ENCODE measurements at regions of chr11 and their contacts with region 1.

Region 1: DNA sequence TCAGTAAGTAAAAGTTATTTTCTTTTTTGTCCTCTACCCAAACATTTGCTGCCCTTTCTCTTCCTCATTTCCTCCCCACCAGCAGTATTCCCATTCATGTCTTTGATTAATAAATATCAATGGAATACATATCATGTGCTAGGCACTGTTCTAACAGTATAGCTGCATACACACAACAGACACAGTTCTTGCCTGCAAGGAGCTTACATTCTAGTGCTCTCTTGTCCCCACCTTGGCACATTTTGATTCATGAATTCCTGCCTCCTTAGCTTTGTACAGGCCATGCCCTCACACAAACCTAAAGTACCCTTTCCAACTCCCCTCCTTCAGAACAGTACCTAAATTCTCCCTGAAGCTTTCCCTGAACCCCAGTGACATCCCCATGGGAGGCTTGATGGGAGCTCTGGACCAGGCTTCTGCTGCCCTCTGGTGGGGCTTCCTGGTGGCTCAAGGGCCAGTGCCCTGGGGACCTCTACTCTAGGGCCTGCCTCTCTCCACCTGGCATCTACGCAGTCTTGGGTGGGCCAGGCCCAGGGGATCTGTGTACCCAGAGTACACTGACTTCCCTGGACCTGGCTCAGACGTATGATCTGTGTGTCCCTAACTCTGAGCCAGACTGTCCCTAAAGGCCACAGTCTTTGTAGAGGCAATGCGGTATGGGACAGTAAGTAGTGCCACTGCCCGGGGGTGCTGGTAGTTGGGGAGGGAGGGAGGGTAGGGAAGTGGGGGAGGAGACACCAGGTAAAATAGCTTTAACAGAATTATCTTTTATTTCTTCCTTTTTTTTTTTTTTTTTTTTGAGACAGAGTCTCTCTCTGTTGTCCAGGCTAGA is 14.1 kb downstream of the RPS13 start:
- DNase-seq: peak; percentile 46
- H3K4me3 ChIP-seq: no peak overlapping the region
- H3K27ac ChIP-seq: no peak overlapping the region
- H3K4me1 ChIP-seq: no peaks in the 10 kb centered on the region
- H3K27me3 ChIP-seq: no peaks in the 10 kb centered on the region
- CTCF ChIP-seq: peak; percentile 76 to 85
- POLR2A ChIP-seq: no peak

Region 2: DNA sequence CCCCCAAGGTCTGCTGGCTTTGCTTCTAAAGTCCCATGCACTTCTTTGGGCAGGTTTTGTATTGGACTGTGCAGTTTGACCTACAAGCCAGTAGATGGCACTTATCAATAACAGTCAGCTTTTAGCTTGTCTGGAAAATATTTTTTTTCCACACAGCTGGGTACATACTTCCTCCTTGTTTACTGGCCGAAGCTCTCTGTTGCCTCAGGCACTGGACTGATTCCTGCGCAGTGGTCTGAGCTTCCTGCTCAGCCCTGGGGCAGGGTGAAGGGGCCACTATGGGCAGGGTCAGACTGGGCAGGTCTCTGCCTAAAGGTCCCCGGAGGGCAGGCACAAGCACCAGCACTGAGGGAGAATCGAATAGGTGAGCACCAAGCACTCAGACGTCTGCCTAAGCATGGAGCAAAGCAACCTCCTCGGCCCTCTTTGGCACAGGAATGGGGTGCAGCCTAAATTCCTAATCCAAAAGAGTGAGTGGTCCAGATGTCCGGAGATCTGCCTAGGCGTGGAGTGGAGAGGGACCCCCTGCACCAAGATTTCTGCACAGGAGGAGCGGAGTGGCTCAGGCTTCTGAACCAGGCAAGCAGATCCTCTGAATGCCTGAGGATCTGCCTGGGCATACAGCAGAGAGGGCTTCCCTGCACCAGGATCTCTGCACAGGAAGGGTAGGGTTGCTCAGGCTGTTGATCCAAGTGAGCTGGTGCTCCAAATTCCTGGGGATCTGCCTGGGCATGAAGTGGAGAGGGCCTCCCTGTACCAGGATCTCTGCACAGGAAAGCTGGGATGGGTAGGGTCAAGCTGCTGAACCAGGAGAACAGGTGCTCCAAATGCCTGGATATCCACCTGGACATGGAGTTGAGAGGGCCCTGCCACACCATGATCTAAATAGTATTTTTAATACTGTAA is 430.8 kb before region 1 on chr11:
- CTCF ChIA-PET with region 1: interaction called, 12 read pairs
- POLR2A ChIA-PET with region 1: no interaction called
- dilution Hi-C with region 1: no loop called
- intact Hi-C with region 1: loop called (anchors 5 kb)
- DNase-seq: peak; percentile 8
- H3K4me3 ChIP-seq: no peak overlapping the region
- H3K27ac ChIP-seq: no peak overlapping the region
- H3K4me1 ChIP-seq: no peaks in the 10 kb centered on the region
- H3K27me3 ChIP-seq: peaks cover 0 to 2% of the 10 kb centered on the region in 2 experiments
- CTCF ChIP-seq: peak in 1 of 2 donors; percentile 51
- POLR2A ChIP-seq: no peak

Region 3: DNA sequence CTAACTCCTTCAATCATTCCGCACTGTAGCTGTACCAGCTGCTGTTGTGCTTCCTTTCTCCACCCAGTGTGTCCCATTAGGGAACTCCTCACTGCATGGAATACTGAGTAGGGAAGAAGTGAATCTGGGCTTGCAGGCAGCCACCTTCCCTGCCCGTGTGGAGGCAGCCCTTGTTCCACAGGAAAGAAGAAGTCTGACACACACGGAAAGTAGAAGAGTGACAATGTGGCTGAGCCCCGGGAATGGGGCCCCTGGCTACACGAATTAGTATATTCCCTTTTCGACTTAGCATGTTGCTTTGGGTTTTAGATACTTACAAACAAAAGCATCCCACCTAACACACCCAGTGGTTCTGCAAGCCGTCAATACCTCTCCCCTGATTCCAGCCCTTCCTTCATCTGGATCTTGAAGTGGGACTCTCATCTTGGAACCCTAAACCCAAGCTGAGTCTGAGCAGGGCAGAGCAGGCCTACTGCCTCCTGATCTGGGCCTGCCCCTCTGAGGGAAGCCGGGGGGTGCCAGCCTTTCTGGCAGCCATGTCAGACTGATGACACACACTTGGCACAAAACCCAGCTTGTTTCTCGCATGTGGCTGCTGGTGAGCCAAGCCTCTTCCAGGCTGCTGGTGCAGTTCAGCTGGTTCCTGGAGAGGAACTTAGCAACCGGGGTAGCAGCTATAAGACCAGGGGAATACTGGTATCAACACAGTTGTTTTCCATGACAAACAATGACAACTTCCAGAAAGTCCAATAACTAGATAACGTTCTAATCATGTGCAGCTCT is 253.3 kb before region 1 on chr11:
- CTCF ChIA-PET with region 1: interaction called, 10 read pairs
- POLR2A ChIA-PET with region 1: interaction called, 8 read pairs
- dilution Hi-C with region 1: no loop called
- intact Hi-C with region 1: no loop called
- DNase-seq: peak; percentile 65
- H3K4me3 ChIP-seq: no peak overlapping the region
- H3K27ac ChIP-seq: no peak overlapping the region
- H3K4me1 ChIP-seq: no peaks in the 10 kb centered on the region
- H3K27me3 ChIP-seq: no peaks in the 10 kb centered on the region
- CTCF ChIP-seq: no peak
- POLR2A ChIP-seq: no peak

Region 4: GRCh38 chr11:16871368-16871767 is 192.0 kb before region 1 on chr11:
- CTCF ChIA-PET with region 1: no interaction called
- POLR2A ChIA-PET with region 1: no interaction called
- dilution Hi-C with region 1: no loop called
- intact Hi-C with region 1: no loop called
- DNase-seq: no peak
- H3K4me3 ChIP-seq: no peak overlapping the region
- H3K27ac ChIP-seq: no peak overlapping the region
- H3K4me1 ChIP-seq: no peaks in the 10 kb centered on the region
- H3K27me3 ChIP-seq: peaks cover 0 to 2% of the 10 kb centered on the region in 2 experiments
- CTCF ChIP-seq: no peak
- POLR2A ChIP-seq: no peak

Region 5: GRCh38 chr11:16935518-16936302 is 127.7 kb before region 1 on chr11:
- CTCF ChIA-PET with region 1: interaction called, 36 read pairs
- POLR2A ChIA-PET with region 1: no interaction called
- dilution Hi-C with region 1: no loop called
- intact Hi-C with region 1: loop called (anchors 1 kb)
- DNase-seq: peak; percentile 41
- H3K4me3 ChIP-seq: no peak overlapping the region
- H3K27ac ChIP-seq: no peak overlapping the region
- H3K4me1 ChIP-seq: no peaks in the 10 kb centered on the region
- H3K27me3 ChIP-seq: peaks cover 0 to 2% of the 10 kb centered on the region in 2 experiments
- CTCF ChIP-seq: peak; percentile 57 to 72
- POLR2A ChIP-seq: no peak

Region 6: GRCh38 chr11:16945671-16946469 is 117.5 kb before region 1 on chr11:
- CTCF ChIA-PET with region 1: interaction called, 153 read pairs
- POLR2A ChIA-PET with region 1: no interaction called
- dilution Hi-C with region 1: no loop called
- intact Hi-C with region 1: loop called (anchors 1 kb)
- DNase-seq: peak; percentile 34
- H3K4me3 ChIP-seq: no peak overlapping the region
- H3K27ac ChIP-seq: no peak overlapping the region
- H3K4me1 ChIP-seq: no peaks in the 10 kb centered on the region
- H3K27me3 ChIP-seq: no peaks in the 10 kb centered on the region
- CTCF ChIP-seq: peak; percentile 53 to 67
- POLR2A ChIP-seq: no peak

Region 7: GRCh38 chr11:17014838-17015626 is 48.4 kb before region 1 on chr11:
- CTCF ChIA-PET with region 1: interaction called, 17 read pairs
- POLR2A ChIA-PET with region 1: no interaction called
- dilution Hi-C with region 1: no loop called
- intact Hi-C with region 1: loop called (anchors 5 kb)
- DNase-seq: peak; percentile 50
- H3K4me3 ChIP-seq: peak overlapping the region; percentile 12 to 66 (median 40)
- H3K27ac ChIP-seq: no peak overlapping the region
- H3K4me1 ChIP-seq: peaks cover 8% of the 10 kb centered on the region
- H3K27me3 ChIP-seq: no peaks in the 10 kb centered on the region
- CTCF ChIP-seq: peak; percentile 65 to 79
- POLR2A ChIP-seq: no peak

Region 8: GRCh38 chr11:17036666-17037542 is 26.5 kb before region 1 on chr11:
- CTCF ChIA-PET with region 1: interaction called, 15 read pairs
- POLR2A ChIA-PET with region 1: no interaction called
- dilution Hi-C with region 1: no loop called
- intact Hi-C with region 1: no loop called
- DNase-seq: no peak
- H3K4me3 ChIP-seq: no peak overlapping the region
- H3K27ac ChIP-seq: no peak overlapping the region
- H3K4me1 ChIP-seq: no peaks in the 10 kb centered on the region
- H3K27me3 ChIP-seq: no peaks in the 10 kb centered on the region
- CTCF ChIP-seq: peak in 1 of 2 donors; percentile 29
- POLR2A ChIP-seq: no peak

Region 9: GRCh38 chr11:17298302-17298701 is 234.9 kb after region 1 on chr11:
- CTCF ChIA-PET with region 1: no interaction called
- POLR2A ChIA-PET with region 1: no interaction called
- dilution Hi-C with region 1: no loop called
- intact Hi-C with region 1: no loop called
- DNase-seq: no peak
- H3K4me3 ChIP-seq: no peak overlapping the region
- H3K27ac ChIP-seq: no peak overlapping the region
- H3K4me1 ChIP-seq: no peaks in the 10 kb centered on the region
- H3K27me3 ChIP-seq: no peaks in the 10 kb centered on the region
- CTCF ChIP-seq: no peak
- POLR2A ChIP-seq: no peak

Region 10: GRCh38 chr11:17412488-17413180 is 349.2 kb after region 1 on chr11:
- CTCF ChIA-PET with region 1: no interaction called
- POLR2A ChIA-PET with region 1: no interaction called
- dilution Hi-C with region 1: no loop called
- intact Hi-C with region 1: no loop called
- DNase-seq: no peak
- H3K4me3 ChIP-seq: no peak overlapping the region
- H3K27ac ChIP-seq: no peak overlapping the region
- H3K4me1 ChIP-seq: no peaks in the 10 kb centered on the region
- H3K27me3 ChIP-seq: no peaks in the 10 kb centered on the region
- CTCF ChIP-seq: no peak
- POLR2A ChIP-seq: no peak

Measured in endothelial cell of umbilical vein (primary cell).